CD8-positive, alpha-beta T cell (primary cell): ENCODE measurements at regions of chr1 and their contacts with region 1.

Region 1: GRCh38 chr1:26500488-26501175 is 28.4 kb downstream of the HMGN2 start:
- DNase-seq: peak; percentile 74 to 95 (median 89)
- ATAC-seq: peak; percentile 75
- H3K4me3 ChIP-seq: peak overlapping the region; percentile 67 to 96
- H3K4me3 Mint-ChIP-seq: peak overlapping the region; percentile 84
- H3K27ac ChIP-seq: peak overlapping the region; percentile 84 to 89
- H3K27ac Mint-ChIP-seq: peak overlapping the region; percentile 89
- H3K4me1 ChIP-seq: peaks cover 13% of the 10 kb centered on the region
- H3K4me1 Mint-ChIP-seq: peaks cover 15% of the 10 kb centered on the region
- H3K27me3 ChIP-seq: no peaks in the 10 kb centered on the region
- H3K27me3 Mint-ChIP-seq: no peaks in the 10 kb centered on the region
- CTCF ChIP-seq: peak; percentile 15

Region 2: DNA sequence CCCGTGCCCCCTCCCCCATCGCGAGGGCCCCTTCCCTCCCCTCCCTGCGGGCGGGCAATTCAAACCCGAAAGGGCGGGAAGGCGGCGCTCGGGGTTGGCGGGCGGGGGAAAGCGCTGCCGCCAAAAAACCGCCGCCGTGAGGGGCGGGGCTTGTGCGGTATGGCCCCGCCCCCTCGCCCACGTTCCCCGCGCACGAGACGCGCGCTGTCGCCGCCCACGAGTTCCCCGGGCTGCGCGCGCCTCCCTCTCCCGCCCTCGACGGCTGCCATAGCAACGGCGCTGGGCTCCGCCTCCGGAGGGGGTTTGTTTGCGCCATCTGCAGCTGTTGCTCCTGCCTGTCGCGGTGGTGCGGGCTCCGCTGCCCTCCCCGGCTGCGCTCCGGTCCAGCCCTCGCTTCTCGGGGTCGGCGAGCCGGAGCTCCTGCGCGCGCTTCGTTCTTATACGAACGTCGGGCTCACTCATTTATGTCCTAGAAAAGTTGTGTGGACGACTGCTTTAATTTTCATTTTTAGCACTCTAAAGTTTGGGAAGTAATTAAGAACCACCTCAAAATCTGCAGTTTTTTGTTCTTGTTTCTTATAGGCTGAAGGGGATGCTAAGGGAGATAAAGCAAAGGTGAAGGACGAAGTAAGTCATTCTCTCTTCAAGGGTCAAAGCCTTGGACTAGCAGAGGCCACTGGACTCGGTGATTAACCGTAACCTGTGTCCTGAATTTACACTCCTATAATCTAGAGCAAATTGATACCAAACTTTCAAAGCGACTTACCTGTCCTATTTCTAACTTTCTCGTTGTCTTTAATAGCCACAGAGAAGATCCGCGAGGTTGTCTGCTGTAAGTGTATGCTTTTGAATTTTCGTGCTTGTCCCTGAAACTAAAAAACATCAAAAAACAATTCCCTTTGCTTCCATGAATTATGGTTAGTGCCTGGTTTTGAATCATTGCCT is 27.5 kb before region 1 on chr1:
- CTCF ChIA-PET with region 1: interaction called, 8 read pairs
- POLR2A ChIA-PET with region 1: interaction called, 32 read pairs
- intact Hi-C with region 1: loop called (anchors 1 kb)
- DNase-seq: peak; percentile 94 to 99 (median 98)
- ATAC-seq: peak; percentile 86
- H3K4me3 ChIP-seq: peak overlapping the region; percentile 48 to 72
- H3K4me3 Mint-ChIP-seq: peak overlapping the region; percentile 85
- H3K27ac ChIP-seq: peak overlapping the region; percentile 93 to 94
- H3K27ac Mint-ChIP-seq: peak overlapping the region; percentile 78
- H3K4me1 ChIP-seq: peaks cover 32% of the 10 kb centered on the region
- H3K4me1 Mint-ChIP-seq: peaks cover 51% of the 10 kb centered on the region
- H3K27me3 ChIP-seq: no peaks in the 10 kb centered on the region
- H3K27me3 Mint-ChIP-seq: no peaks in the 10 kb centered on the region
- CTCF ChIP-seq: no peak

Region 3: GRCh38 chr1:26541816-26542711 is 41.4 kb after region 1 on chr1:
- CTCF ChIA-PET with region 1: interaction called, 24 read pairs
- POLR2A ChIA-PET with region 1: interaction called, 16 read pairs
- intact Hi-C with region 1: loop called (anchors 1 kb)
- DNase-seq: peak; percentile 45 to 90 (median 76)
- ATAC-seq: peak; percentile 71
- H3K4me3 ChIP-seq: peak overlapping the region; percentile 32 to 36
- H3K4me3 Mint-ChIP-seq: peak overlapping the region; percentile 81
- H3K27ac ChIP-seq: peak overlapping the region; percentile 56 to 85
- H3K27ac Mint-ChIP-seq: peak overlapping the region; percentile 97
- H3K4me1 ChIP-seq: peaks cover 87% of the 10 kb centered on the region
- H3K4me1 Mint-ChIP-seq: peaks cover 88% of the 10 kb centered on the region
- H3K27me3 ChIP-seq: no peaks in the 10 kb centered on the region
- H3K27me3 Mint-ChIP-seq: no peaks in the 10 kb centered on the region
- CTCF ChIP-seq: peak; percentile 65

Region 4: DNA sequence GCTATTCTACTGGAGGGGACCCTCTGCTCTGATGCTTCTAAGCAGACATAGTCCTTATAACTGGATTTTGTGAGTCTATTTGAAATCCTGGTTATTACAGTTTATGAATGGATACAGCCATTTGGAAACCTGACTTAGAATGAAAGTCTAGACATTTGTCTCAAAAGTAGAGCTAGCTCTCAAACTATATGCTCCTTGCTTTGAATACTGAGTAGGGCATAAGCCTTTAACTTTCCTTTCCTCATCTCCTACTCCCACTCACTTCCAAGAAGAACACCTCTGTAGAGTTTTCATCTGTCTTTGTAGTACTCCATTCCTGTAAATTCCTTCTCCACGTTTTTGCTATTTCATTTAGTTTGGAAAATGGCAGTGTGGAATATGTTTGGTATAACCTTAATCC is 186.2 kb after region 1 on chr1:
- CTCF ChIA-PET with region 1: interaction called, 4 read pairs
- POLR2A ChIA-PET with region 1: interaction called, 13 read pairs
- intact Hi-C with region 1: loop called in 1 of 2 experiments (anchors 5 kb)
- DNase-seq: no peak
- ATAC-seq: no peak
- H3K4me3 ChIP-seq: no peak overlapping the region
- H3K4me3 Mint-ChIP-seq: no peak overlapping the region
- H3K27ac ChIP-seq: no peak overlapping the region
- H3K27ac Mint-ChIP-seq: no peak overlapping the region
- H3K4me1 ChIP-seq: peaks cover 8% of the 10 kb centered on the region
- H3K4me1 Mint-ChIP-seq: peaks cover 13% of the 10 kb centered on the region
- H3K27me3 ChIP-seq: no peaks in the 10 kb centered on the region
- H3K27me3 Mint-ChIP-seq: no peaks in the 10 kb centered on the region
- CTCF ChIP-seq: no peak

Region 5: DNA sequence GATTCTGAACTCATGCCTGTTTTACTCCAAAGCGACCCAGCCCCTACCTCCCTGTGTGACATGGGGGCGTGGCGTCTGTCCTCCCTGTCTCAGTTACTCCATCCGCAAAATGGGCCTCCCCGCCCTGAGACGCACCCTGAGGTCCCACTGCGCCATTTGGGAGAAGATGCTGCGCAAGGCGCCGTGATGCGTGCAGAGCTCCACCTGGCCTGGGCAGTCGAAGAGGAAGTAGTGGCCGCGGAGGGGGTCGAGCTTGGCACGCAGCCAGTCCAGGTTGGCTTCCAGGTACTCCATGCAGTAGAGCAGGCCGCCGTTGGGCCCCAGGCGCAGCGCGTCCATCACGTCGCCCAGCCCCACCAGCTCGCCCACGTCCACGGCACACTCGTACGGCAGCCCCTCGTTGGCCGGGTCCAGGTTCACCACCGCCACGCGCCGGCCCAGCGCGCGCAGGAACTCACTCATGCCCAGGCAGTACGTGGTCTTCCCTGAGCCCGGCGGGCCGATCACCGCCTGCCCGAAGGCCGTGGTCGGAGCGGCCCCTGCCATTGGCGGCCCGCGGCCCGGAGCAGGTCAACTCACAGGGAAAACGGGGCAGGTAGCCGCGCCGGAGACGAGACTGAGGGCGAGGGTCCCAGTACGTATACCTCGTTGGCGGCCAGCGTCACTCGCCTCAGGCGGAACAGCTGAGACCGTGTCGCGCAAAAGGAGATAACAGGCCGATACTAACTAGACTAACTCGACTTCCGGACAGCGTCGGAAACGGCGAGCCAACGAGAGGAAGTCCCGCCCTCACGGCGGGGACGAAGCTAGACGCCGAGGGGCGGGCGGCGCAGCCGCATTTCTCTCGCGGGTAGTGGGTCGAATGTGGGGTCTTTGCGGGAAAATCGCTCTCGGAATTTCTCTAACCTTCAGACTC is 389.2 kb after region 1 on chr1 and contains the start of gene GPN2:
- CTCF ChIA-PET with region 1: no interaction called
- POLR2A ChIA-PET with region 1: no interaction called
- intact Hi-C with region 1: no loop called
- DNase-seq: peak; percentile 44 to 90 (median 74)
- ATAC-seq: peak; percentile 92
- H3K4me3 ChIP-seq: peak within 1 kb of the TSS; percentile 57 to 94
- H3K4me3 Mint-ChIP-seq: peak within 1 kb of the TSS; percentile 94
- H3K27ac ChIP-seq: peak within 1 kb of the TSS; percentile 80 to 86
- H3K27ac Mint-ChIP-seq: peak within 1 kb of the TSS; percentile 96
- H3K4me1 ChIP-seq: peaks cover 18% of the 10 kb centered on the region
- H3K4me1 Mint-ChIP-seq: peaks cover 42% of the 10 kb centered on the region
- H3K27me3 ChIP-seq: no peaks in the 10 kb centered on the region
- H3K27me3 Mint-ChIP-seq: no peaks in the 10 kb centered on the region
- CTCF ChIP-seq: no peak
- total RNA-seq, gene GPN2: 35.1 to 37.4 TPM

Region 6: GRCh38 chr1:27154991-27155781 is 654.6 kb after region 1 on chr1 and contains the start of gene SLC9A1:
- CTCF ChIA-PET with region 1: no interaction called
- POLR2A ChIA-PET with region 1: no interaction called
- intact Hi-C with region 1: loop called in 1 of 2 experiments (anchors 5 kb)
- DNase-seq: peak; percentile 88 to 96 (median 91)
- ATAC-seq: peak; percentile 94
- H3K4me3 ChIP-seq: peak within 1 kb of the TSS; percentile 75 to 83
- H3K4me3 Mint-ChIP-seq: peak within 1 kb of the TSS; percentile 81
- H3K27ac ChIP-seq: peak within 1 kb of the TSS; percentile 92 to 100
- H3K27ac Mint-ChIP-seq: peak within 1 kb of the TSS; percentile 99
- H3K4me1 ChIP-seq: peaks cover 40% of the 10 kb centered on the region
- H3K4me1 Mint-ChIP-seq: peaks cover 45% of the 10 kb centered on the region
- H3K27me3 ChIP-seq: no peaks in the 10 kb centered on the region
- H3K27me3 Mint-ChIP-seq: no peaks in the 10 kb centered on the region
- CTCF ChIP-seq: peak; percentile 82
- total RNA-seq, gene SLC9A1: 17.9 to 18.3 TPM

Region 7: DNA sequence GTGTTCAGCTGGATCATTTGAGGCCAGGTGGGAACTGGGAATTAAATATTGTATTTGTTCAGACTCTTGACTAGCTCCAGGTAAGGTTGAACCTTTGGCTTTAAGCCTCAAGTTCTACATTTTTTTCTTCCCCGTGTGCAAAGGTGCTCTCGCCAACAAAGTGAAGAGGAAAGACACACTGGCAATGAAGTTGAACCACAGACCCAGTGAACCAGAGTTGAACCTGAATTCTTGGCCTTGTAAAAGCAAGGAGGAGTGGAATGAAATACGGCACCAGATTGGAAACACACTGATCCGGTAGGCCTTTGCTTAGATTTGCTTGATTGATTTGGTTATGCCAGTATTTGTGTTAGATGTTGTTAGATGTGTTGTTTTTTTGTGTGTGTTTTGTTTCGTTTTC is 1979.7 kb after region 1 on chr1:
- CTCF ChIA-PET with region 1: no interaction called
- POLR2A ChIA-PET with region 1: no interaction called
- intact Hi-C with region 1: no loop called
- DNase-seq: no peak
- ATAC-seq: no peak
- H3K4me3 ChIP-seq: no peak overlapping the region
- H3K4me3 Mint-ChIP-seq: no peak overlapping the region
- H3K27ac ChIP-seq: no peak overlapping the region
- H3K27ac Mint-ChIP-seq: no peak overlapping the region
- H3K4me1 ChIP-seq: no peaks in the 10 kb centered on the region
- H3K4me1 Mint-ChIP-seq: no peaks in the 10 kb centered on the region
- H3K27me3 ChIP-seq: no peaks in the 10 kb centered on the region
- H3K27me3 Mint-ChIP-seq: no peaks in the 10 kb centered on the region
- CTCF ChIP-seq: no peak